GM18951 (cell line): ENCODE measurements at regions of chr1 and their contacts with region 1.

Region 1: GRCh38 chr1:186155594-186155993 is 219.5 kb downstream of the TPR start:
- POLR2A ChIP-seq: no peak

Region 2: GRCh38 chr1:186094170-186094569 is 61.4 kb before region 1 on chr1:
- in situ Hi-C with region 1: loop called (anchors 10 kb)
- POLR2A ChIP-seq: no peak

Region 3: DNA sequence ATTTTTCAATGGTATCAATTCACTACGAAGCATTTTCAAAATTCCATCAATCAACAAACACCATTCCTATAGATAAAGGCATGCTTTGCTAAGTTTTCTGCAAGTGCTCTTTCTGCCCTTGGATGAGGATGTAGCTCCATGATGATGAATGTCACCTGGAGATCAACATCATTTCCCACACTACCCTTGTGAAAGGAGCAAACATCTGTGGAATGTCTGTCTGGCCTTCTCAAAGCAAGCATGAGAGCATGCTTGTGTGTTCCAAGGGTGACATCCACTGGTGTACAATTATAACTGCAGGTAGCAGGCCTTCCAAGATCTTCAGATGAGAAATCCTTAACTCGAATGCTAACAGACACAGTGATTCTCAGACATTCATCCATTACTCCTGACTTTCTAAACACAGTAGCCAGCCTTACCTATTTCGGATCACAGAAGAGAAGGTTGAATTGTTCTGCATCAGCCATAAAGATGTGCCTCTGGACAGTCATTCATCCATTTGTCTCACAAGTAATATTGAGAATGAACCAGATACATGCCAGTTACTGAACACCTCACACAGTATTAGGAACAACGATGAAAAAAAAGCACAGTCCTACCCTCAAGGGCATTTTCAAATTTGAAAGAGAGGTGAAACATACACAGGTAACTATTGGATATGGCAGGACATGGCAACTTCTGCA is 57.1 kb after region 1 on chr1:
- in situ Hi-C with region 1: no loop called
- POLR2A ChIP-seq: no peak

Region 4: GRCh38 chr1:186424539-186424938 is 268.9 kb after region 1 on chr1:
- in situ Hi-C with region 1: no loop called
- POLR2A ChIP-seq: no peak